CD8-positive, alpha-beta T cell (primary cell): ENCODE measurements at regions of chr1 and their contacts with region 1.

Region 1: GRCh38 chr1:87045761-87046304 is 131.4 kb downstream of the HS2ST1 start:
- DNase-seq: peak in 7 of 9 experiments; percentile 1 to 85 (median 56)
- ATAC-seq: peak; percentile 65
- H3K4me3 ChIP-seq: no peak overlapping the region
- H3K4me3 Mint-ChIP-seq: peak overlapping the region; percentile 63
- H3K27ac ChIP-seq: peak overlapping the region in 1 of 2 experiments; percentile 43
- H3K27ac Mint-ChIP-seq: peak overlapping the region; percentile 91
- H3K4me1 ChIP-seq: peaks cover 21% of the 10 kb centered on the region
- H3K4me1 Mint-ChIP-seq: peaks cover 55% of the 10 kb centered on the region
- H3K27me3 ChIP-seq: no peaks in the 10 kb centered on the region
- H3K27me3 Mint-ChIP-seq: no peaks in the 10 kb centered on the region
- CTCF ChIP-seq: no peak

Region 2: GRCh38 chr1:87024936-87025540 is 20.8 kb before region 1 on chr1:
- CTCF ChIA-PET with region 1: no interaction called
- POLR2A ChIA-PET with region 1: no interaction called
- intact Hi-C with region 1: loop called in 1 of 2 experiments (anchors 2 kb)
- DNase-seq: peak in 2 of 9 experiments; percentile 6 to 28
- ATAC-seq: no peak
- H3K4me3 ChIP-seq: no peak overlapping the region
- H3K4me3 Mint-ChIP-seq: no peak overlapping the region
- H3K27ac ChIP-seq: no peak overlapping the region
- H3K27ac Mint-ChIP-seq: no peak overlapping the region
- H3K4me1 ChIP-seq: no peaks in the 10 kb centered on the region
- H3K4me1 Mint-ChIP-seq: peaks cover 2% of the 10 kb centered on the region
- H3K27me3 ChIP-seq: no peaks in the 10 kb centered on the region
- H3K27me3 Mint-ChIP-seq: no peaks in the 10 kb centered on the region
- CTCF ChIP-seq: no peak

Region 3: GRCh38 chr1:87335175-87335884 is 289.5 kb after region 1 on chr1:
- CTCF ChIA-PET with region 1: no interaction called
- POLR2A ChIA-PET with region 1: no interaction called
- intact Hi-C with region 1: loop called in 1 of 2 experiments (anchors 10 kb)
- DNase-seq: peak in 8 of 9 experiments; percentile 48 to 77 (median 64)
- ATAC-seq: peak; percentile 53
- H3K4me3 ChIP-seq: peak overlapping the region; percentile 53 to 60
- H3K4me3 Mint-ChIP-seq: peak overlapping the region; percentile 89
- H3K27ac ChIP-seq: peak overlapping the region; percentile 14 to 62
- H3K27ac Mint-ChIP-seq: peak overlapping the region; percentile 90
- H3K4me1 ChIP-seq: peaks cover 35% of the 10 kb centered on the region
- H3K4me1 Mint-ChIP-seq: peaks cover 56% of the 10 kb centered on the region
- H3K27me3 ChIP-seq: no peaks in the 10 kb centered on the region
- H3K27me3 Mint-ChIP-seq: no peaks in the 10 kb centered on the region
- CTCF ChIP-seq: no peak